ENCODE measurements at regions of chr14 and their contacts with region 1.

Region 1: GRCh38 chr14:74501135-74501614 is 7.6 kb downstream of the ISCA2 start:
- DNase-seq: peak; percentile 56 to 77
- H3K4me3 ChIP-seq: peak overlapping the region in 3 of 4 experiments; percentile 10 to 32 (median 15); a peak in 4 of 8 replicates
- H3K27ac ChIP-seq: peak overlapping the region; percentile 84
- H3K4me1 ChIP-seq: peaks cover 4 to 19% (median 16%) of the 10 kb centered on the region in 4 experiments
- H3K27me3 ChIP-seq: no peaks in the 10 kb centered on the region
- CTCF ChIP-seq: peak in 2 of 3 experiments; percentile 88 to 94; a peak in 3 of 4 replicates
- EP300 ChIP-seq: no peak
- POLR2A ChIP-seq: no peak
- RAD21 ChIP-seq: peak; percentile 76 to 85

Region 2: DNA sequence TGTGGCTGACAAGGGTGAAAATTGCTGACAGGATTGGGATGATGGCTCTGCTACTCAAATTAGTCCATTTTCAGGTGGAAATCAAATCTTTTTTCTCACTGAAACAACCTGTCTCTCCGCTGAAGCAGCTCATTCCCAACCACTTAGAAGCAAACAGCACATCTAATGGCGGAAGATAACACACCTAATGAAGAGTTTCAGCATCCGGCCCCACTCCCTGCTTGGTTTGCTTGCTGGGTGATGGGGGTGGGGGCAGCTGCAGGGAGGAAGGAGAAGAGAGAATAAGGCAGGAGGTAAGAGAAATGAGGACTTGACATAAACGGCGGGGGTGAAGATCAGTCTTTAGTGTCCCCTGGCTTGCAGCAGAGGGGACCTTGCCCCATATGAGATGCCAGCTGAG is 79.2 kb before region 1 on chr14:
- CTCF ChIA-PET with region 1: no interaction called
- POLR2A ChIA-PET with region 1: no interaction called
- DNase-seq: no peak
- H3K4me3 ChIP-seq: no peak overlapping the region
- H3K27ac ChIP-seq: no peak overlapping the region
- H3K4me1 ChIP-seq: peaks cover 8 to 14% (median 12%) of the 10 kb centered on the region in 4 experiments; a peak in 6 of 7 replicates
- H3K27me3 ChIP-seq: peaks cover 0 to 12% (median 7%) of the 10 kb centered on the region in 4 experiments; a peak in 4 of 7 replicates
- CTCF ChIP-seq: no peak
- EP300 ChIP-seq: no peak
- POLR2A ChIP-seq: no peak
- RAD21 ChIP-seq: no peak

Region 3: DNA sequence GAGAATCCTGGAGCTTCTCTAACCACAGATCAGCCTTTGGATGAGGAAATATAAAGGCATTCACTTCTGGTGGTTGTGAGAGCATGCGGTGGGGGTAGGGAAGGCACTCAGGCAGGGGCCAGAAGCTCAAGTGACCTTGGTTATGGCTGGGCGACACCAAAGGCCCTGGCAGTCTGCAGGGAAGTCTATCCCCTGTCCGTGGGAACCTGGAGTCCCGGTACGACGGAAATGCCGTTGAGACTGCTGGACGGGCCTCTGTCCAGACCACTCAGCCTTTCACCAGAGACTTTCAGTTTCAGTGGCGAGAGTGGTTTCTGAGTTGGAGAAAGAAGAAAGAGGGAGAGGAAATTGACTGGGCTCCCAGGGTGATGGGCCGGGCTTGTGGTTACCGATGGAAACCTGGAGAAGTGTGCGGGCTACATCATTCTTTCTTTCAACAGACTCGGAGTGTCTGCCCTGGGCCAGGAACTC is 13.3 kb after region 1 on chr14:
- CTCF ChIA-PET with region 1: interaction called, 64 read pairs
- POLR2A ChIA-PET with region 1: interaction called, 5 read pairs
- DNase-seq: no peak
- H3K4me3 ChIP-seq: no peak overlapping the region
- H3K27ac ChIP-seq: no peak overlapping the region
- H3K4me1 ChIP-seq: peaks cover 4 to 23% (median 11%) of the 10 kb centered on the region in 4 experiments
- H3K27me3 ChIP-seq: no peaks in the 10 kb centered on the region; a peak in 1 of 7 replicates
- CTCF ChIP-seq: no peak
- EP300 ChIP-seq: no peak
- POLR2A ChIP-seq: no peak
- RAD21 ChIP-seq: no peak

Region 4: DNA sequence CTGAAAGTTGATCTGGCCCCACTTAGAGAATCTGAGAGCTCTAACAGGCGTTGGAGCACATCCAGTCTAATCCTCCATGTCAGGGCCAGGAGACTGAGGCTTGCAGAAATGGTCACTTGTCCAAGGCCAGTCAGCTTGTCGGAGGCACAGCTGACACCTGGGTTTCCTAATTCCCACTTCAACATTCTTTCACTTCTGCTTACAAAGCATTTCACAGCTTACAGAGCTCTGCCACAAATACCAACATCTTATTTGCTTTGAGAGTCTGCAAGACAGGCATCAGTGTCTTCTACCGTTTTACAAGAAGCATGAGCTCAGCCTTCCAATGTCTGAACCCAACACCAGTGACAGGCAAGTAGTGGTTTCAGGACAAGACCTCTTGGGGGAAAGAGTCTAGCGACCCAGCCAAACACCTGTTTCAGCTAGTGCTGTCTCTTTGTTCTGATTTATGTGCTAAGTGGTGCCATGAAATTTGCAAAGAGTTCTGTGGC is 24.2 kb after region 1 on chr14:
- CTCF ChIA-PET with region 1: interaction called, 61 read pairs
- POLR2A ChIA-PET with region 1: interaction called, 3 read pairs
- DNase-seq: no peak
- H3K4me3 ChIP-seq: no peak overlapping the region
- H3K27ac ChIP-seq: no peak overlapping the region
- H3K4me1 ChIP-seq: peaks cover 0 to 6% (median 3%) of the 10 kb centered on the region in 4 experiments; a peak in 2 of 7 replicates
- H3K27me3 ChIP-seq: no peaks in the 10 kb centered on the region
- CTCF ChIP-seq: no peak
- EP300 ChIP-seq: no peak
- POLR2A ChIP-seq: no peak
- RAD21 ChIP-seq: no peak

Region 5: GRCh38 chr14:74566174-74567125 is 65.3 kb after region 1 on chr14:
- CTCF ChIA-PET with region 1: interaction called, 18 read pairs
- POLR2A ChIA-PET with region 1: no interaction called
- DNase-seq: no peak
- H3K4me3 ChIP-seq: no peak overlapping the region
- H3K27ac ChIP-seq: no peak overlapping the region
- H3K4me1 ChIP-seq: peaks cover 0 to 12% (median 3%) of the 10 kb centered on the region in 4 experiments; a peak in 5 of 7 replicates
- H3K27me3 ChIP-seq: no peaks in the 10 kb centered on the region
- CTCF ChIP-seq: no peak
- EP300 ChIP-seq: no peak
- POLR2A ChIP-seq: no peak
- RAD21 ChIP-seq: no peak

Region 6: GRCh38 chr14:74589291-74589879 is 88.2 kb after region 1 on chr14:
- CTCF ChIA-PET with region 1: interaction called, 10 read pairs
- POLR2A ChIA-PET with region 1: no interaction called
- DNase-seq: no peak
- H3K4me3 ChIP-seq: no peak overlapping the region
- H3K27ac ChIP-seq: no peak overlapping the region
- H3K4me1 ChIP-seq: 0 out of 7 replicates have a peak, but pooled peaks cover 0 to 2% (median 0%) of the 10 kb centered on the region in 4 experiments
- H3K27me3 ChIP-seq: no peaks in the 10 kb centered on the region
- CTCF ChIP-seq: no peak
- EP300 ChIP-seq: no peak
- POLR2A ChIP-seq: no peak
- RAD21 ChIP-seq: no peak

Region 7: GRCh38 chr14:74860906-74861733 is 359.9 kb after region 1 on chr14:
- CTCF ChIA-PET with region 1: no interaction called
- POLR2A ChIA-PET with region 1: no interaction called
- DNase-seq: peak; percentile 79 to 98
- H3K4me3 ChIP-seq: no peak overlapping the region
- H3K27ac ChIP-seq: no peak overlapping the region
- H3K4me1 ChIP-seq: 0 out of 7 replicates have a peak, but pooled peaks cover 0 to 2% (median 0%) of the 10 kb centered on the region in 4 experiments
- H3K27me3 ChIP-seq: no peaks in the 10 kb centered on the region
- CTCF ChIP-seq: peak; percentile 81 to 89 (median 88)
- EP300 ChIP-seq: no peak
- POLR2A ChIP-seq: no peak
- RAD21 ChIP-seq: peak; percentile 93 to 95

Measured in H1 (cell line).